Activated naive CD4-positive, alpha-beta T cell treated with anti-CD3 and anti-CD28 coated beads for 36 hours (primary cell): ENCODE measurements at regions of chr3 and their contacts with region 1.

Region 1: DNA sequence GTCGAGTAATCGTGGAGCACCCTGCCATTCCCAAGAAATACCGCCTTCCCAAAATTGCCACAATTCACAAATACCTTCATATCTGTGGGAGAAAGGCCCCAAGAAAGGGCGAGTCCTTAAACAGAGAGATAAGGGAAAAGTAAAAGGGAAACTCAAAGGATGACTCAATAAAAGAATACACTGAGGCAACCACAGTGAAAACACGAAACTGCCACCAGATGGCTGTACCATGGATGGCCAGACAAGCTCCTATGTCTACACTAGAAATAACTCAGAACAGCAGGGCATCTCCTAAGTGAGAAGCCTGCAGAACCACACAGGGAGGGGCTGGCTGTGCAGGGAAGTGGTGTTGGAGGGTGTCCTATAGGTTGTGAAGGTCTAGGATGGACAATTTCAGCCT is 25.0 kb downstream of the SRGAP3 start:
- DNase-seq: peak; percentile 68
- H3K4me3 Mint-ChIP-seq: no peak overlapping the region
- H3K27ac Mint-ChIP-seq: peak overlapping the region; percentile 21
- H3K4me1 Mint-ChIP-seq: peaks cover 5% of the 10 kb centered on the region
- H3K27me3 Mint-ChIP-seq: no peaks in the 10 kb centered on the region

Region 2: DNA sequence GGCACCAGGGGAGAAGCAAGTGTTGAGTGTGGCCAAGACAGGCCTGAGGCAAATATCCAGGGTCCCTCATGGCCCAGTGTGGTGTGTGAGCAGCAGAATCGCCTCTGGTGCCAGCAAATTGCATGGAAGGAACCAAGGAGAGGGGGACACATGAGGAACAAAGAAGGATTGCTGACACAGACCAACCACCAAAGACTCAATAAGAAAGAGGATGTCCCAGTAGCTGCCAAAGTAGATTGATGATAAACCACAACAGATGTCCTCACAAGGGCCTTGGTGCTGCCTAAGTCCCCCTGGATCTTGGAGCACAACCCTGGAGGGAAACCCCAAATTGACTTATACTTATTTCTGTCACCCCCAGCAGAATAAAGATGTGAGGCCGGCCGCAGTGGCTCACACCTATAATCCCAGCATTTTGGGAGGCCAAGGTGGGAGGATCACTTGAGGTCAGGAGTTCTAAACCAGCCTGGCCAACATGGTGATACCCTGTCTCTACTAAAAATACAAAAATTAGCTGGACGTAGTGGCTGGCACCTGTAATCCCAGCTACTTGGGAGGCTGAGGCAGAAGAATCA is 14.3 kb after region 1 on chr3:
- CTCF ChIA-PET with region 1: no interaction called
- intact Hi-C with region 1: no loop called
- DNase-seq: no peak
- H3K4me3 Mint-ChIP-seq: no peak overlapping the region
- H3K27ac Mint-ChIP-seq: no peak overlapping the region
- H3K4me1 Mint-ChIP-seq: no peaks in the 10 kb centered on the region
- H3K27me3 Mint-ChIP-seq: no peaks in the 10 kb centered on the region

Region 3: DNA sequence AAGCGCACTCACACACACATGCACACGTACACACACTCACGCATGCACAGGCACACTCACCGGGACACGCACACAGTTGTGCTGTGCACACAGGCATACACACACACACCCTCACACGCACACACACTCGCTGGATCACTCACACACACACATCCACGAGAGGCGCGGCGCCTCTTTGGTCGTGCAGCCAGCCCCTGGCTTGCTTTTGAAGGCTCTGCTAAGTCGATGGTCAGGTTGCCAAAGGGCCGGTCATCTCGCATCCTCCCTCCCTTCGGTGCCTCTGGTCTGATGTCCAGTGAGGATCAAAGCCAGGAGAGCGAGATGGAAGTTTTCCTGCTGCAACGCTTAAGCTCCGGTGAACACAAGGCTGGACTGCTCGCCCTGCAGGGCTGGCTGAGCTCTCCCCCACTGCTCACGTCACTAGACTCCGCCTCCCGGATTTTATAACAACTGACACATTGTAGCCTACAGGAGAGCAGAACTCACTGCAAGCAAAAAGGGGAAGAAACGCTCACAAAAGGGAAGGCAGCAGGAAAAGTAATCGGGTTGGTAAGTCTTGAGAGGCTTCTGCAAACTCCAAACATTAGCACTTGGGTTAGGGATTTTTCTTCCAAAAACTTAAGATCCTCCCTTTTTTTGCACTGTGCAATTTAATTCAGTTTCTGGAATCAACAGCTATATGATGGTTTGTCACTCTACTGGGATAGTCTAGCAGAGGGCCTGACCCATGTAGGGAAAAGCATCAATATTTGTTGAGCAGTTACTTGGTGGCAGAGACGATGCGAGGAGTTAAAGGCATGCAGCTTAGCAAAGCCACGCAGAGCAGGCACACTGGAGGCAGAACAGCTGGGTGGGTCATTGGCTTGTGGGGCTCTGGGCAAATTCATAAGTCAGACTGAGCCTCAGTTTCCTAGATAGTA is 25.0 kb after region 1 on chr3 and contains the start of gene SRGAP3:
- CTCF ChIA-PET with region 1: interaction called, 3 read pairs
- intact Hi-C with region 1: loop called (anchors 1 kb)
- DNase-seq: peak; percentile 86
- H3K4me3 Mint-ChIP-seq: peak within 1 kb of the TSS; percentile 77
- H3K27ac Mint-ChIP-seq: peak within 1 kb of the TSS; percentile 28
- H3K4me1 Mint-ChIP-seq: peaks cover 17% of the 10 kb centered on the region
- H3K27me3 Mint-ChIP-seq: no peaks in the 10 kb centered on the region
- total RNA-seq, gene SRGAP3: 2.4 to 2.5 TPM

Region 4: DNA sequence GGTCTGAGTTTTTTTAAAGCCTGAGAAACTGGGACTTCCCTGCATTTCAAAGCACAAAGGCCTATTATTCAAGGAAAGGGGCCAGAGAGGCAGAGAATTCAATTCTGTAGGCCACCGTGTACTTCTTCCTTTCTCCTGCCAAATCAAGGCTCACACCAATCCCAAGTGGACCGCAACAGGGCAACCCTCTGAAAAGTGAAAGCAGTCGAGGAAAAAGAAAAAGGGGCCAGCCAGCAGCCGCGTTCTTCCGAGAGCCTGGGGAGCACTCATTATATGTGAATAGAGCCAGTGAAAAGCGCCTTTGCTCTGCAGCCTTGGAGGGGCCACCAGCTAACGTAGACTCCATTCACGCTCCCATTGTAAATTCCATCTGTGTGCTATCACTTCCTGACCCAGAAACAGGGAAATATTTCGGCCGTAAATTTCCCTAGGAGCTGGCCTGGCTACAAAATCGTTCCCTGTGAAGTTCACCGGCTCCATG is 92.4 kb after region 1 on chr3:
- CTCF ChIA-PET with region 1: no interaction called
- intact Hi-C with region 1: no loop called
- DNase-seq: no peak
- H3K4me3 Mint-ChIP-seq: no peak overlapping the region
- H3K27ac Mint-ChIP-seq: no peak overlapping the region
- H3K4me1 Mint-ChIP-seq: no peaks in the 10 kb centered on the region
- H3K27me3 Mint-ChIP-seq: no peaks in the 10 kb centered on the region